ENCODE measurements at regions of chr10 and their contacts with region 1.

Region 1: GRCh38 chr10:89217057-89217990 is 10.2 kb upstream of the CH25H start:
- DNase-seq: peak; percentile 24 to 58
- ATAC-seq: peak; percentile 69 to 74; a peak in 4 of 6 replicates
- H3K4me3 ChIP-seq: no peak overlapping the region
- H3K27ac ChIP-seq: no peak overlapping the region
- H3K4me1 ChIP-seq: peaks cover 6% of the 10 kb centered on the region; the same call in 2 of the 3 replicates
- CTCF ChIP-seq: peak; percentile 84
- EP300 ChIP-seq: no peak
- POLR2A ChIP-seq: no peak
- RAD21 ChIP-seq: peak; percentile 69 to 70

Region 2: GRCh38 chr10:89022734-89023133 is 194.6 kb before region 1 on chr10:
- CTCF ChIA-PET with region 1: interaction called, 55 read pairs
- POLR2A ChIA-PET with region 1: no interaction called
- DNase-seq: no peak
- ATAC-seq: no peak
- H3K4me3 ChIP-seq: no peak overlapping the region
- H3K27ac ChIP-seq: no peak overlapping the region
- H3K4me1 ChIP-seq: no peaks in the 10 kb centered on the region
- CTCF ChIP-seq: no peak
- EP300 ChIP-seq: no peak
- POLR2A ChIP-seq: no peak
- RAD21 ChIP-seq: no peak

Region 3: GRCh38 chr10:89207181-89207800 is 10.0 kb before region 1 on chr10 and contains the start of gene CH25H:
- CTCF ChIA-PET with region 1: interaction called, 28 read pairs
- POLR2A ChIA-PET with region 1: no interaction called
- DNase-seq: peak; percentile 39 to 46
- ATAC-seq: peak; percentile 86 to 88
- H3K4me3 ChIP-seq: peak within 1 kb of the TSS; percentile 49
- H3K27ac ChIP-seq: peak within 1 kb of the TSS; percentile 21 to 34; a peak in 2 of 6 replicates
- H3K4me1 ChIP-seq: peaks cover 7% of the 10 kb centered on the region; the same call in 1 of the 3 replicates
- CTCF ChIP-seq: no peak
- EP300 ChIP-seq: no peak
- POLR2A ChIP-seq: no peak
- RAD21 ChIP-seq: no peak
- polyA plus RNA-seq, gene CH25H: 0.05 TPM in 1 of 2 replicates, not detected in the other

Region 4: GRCh38 chr10:89251409-89252224 is 34.3 kb after region 1 on chr10 and contains the start of gene LIPA:
- CTCF ChIA-PET with region 1: interaction called, 12 read pairs
- POLR2A ChIA-PET with region 1: no interaction called
- DNase-seq: peak; percentile 96 to 98
- ATAC-seq: peak; percentile 99
- H3K4me3 ChIP-seq: peak within 1 kb of the TSS; percentile 93
- H3K27ac ChIP-seq: peak within 1 kb of the TSS; percentile 88 to 91
- H3K4me1 ChIP-seq: peaks cover 8% of the 10 kb centered on the region
- CTCF ChIP-seq: no peak
- EP300 ChIP-seq: no peak
- POLR2A ChIP-seq: peak; percentile 62
- RAD21 ChIP-seq: no peak
- polyA plus RNA-seq, gene LIPA: 80.2 and 96.2 TPM in 2 replicates

Region 5: GRCh38 chr10:89278034-89278535 is 60.8 kb after region 1 on chr10:
- CTCF ChIA-PET with region 1: no interaction called
- POLR2A ChIA-PET with region 1: no interaction called
- DNase-seq: peak; percentile 79 to 86
- ATAC-seq: peak; percentile 91 to 95
- H3K4me3 ChIP-seq: no peak overlapping the region
- H3K27ac ChIP-seq: peak overlapping the region; percentile 86 to 87
- H3K4me1 ChIP-seq: peaks cover 57% of the 10 kb centered on the region
- CTCF ChIP-seq: no peak
- EP300 ChIP-seq: peak; percentile 35 to 65; a peak in 2 of 5 replicates
- POLR2A ChIP-seq: no peak
- RAD21 ChIP-seq: peak; percentile 6 to 27; a peak in 2 of 5 replicates

Measured in A549 (cell line).